A673 (cell line): ENCODE measurements at regions of chr6 and their contacts with region 1.

Region 1: DNA sequence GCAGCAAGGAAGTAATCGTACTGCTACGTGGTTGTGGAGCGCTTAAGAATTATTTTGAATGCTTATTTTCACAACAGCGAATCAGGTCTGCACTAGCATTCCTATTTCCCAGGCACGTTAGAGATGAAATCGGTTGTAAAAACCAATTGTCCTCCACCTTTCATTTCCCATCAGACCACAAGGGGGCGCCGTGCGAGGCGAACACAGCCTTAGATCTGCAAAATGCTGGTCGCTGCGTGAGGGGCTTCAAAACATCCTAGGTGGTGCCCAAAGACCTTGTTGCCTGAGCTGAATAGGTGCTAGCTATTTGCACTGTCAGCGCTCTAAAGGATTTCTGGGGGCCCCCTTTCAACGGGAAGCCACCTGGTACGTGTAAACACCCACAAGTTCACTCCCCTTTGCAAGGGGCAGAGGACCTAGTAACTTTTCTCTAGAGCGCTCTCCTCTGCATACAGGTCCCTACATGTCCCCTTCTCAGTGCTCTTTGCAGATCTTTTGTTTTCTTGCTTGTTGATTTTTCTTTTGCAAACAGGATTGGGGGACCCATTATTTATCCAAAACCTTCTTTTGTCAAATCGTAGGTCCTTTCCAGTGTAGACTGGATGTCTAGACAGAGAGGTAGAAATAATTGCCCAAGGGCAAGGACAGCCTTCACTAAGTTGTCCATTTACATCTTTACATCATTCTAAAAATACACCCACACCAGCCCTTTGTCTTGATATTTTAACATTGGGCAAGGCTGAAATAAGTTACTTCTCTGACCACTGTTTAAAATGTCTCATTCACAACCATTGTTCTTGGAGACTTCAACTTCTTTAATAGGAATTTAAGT is 59.8 kb downstream of the NEDD9 start:
- DNase-seq: peak; percentile 76
- H3K4me3 ChIP-seq: no peak overlapping the region
- H3K27ac ChIP-seq: no peak overlapping the region
- H3K4me1 ChIP-seq: peaks cover 4% of the 10 kb centered on the region
- H3K27me3 ChIP-seq: no peaks in the 10 kb centered on the region
- CTCF ChIP-seq: peak; percentile 93

Region 2: GRCh38 chr6:11161031-11161966 is 11.4 kb before region 1 on chr6:
- CTCF ChIA-PET with region 1: no interaction called
- POLR2A ChIA-PET with region 1: no interaction called
- intact Hi-C with region 1: no loop called
- DNase-seq: peak; percentile 24
- H3K4me3 ChIP-seq: no peak overlapping the region
- H3K27ac ChIP-seq: no peak overlapping the region
- H3K4me1 ChIP-seq: no peaks in the 10 kb centered on the region
- H3K27me3 ChIP-seq: no peaks in the 10 kb centered on the region
- CTCF ChIP-seq: no peak

Region 3: GRCh38 chr6:11232193-11232769 is 59.6 kb after region 1 on chr6 and contains the start of gene NEDD9:
- CTCF ChIA-PET with region 1: interaction called, 7 read pairs
- POLR2A ChIA-PET with region 1: interaction called, 7 read pairs
- intact Hi-C with region 1: loop called (anchors 2 kb)
- DNase-seq: peak; percentile 99
- H3K4me3 ChIP-seq: peak within 1 kb of the TSS; percentile 60
- H3K27ac ChIP-seq: peak within 1 kb of the TSS; percentile 73
- H3K4me1 ChIP-seq: peaks cover 23% of the 10 kb centered on the region
- H3K27me3 ChIP-seq: no peaks in the 10 kb centered on the region
- CTCF ChIP-seq: no peak
- total RNA-seq, gene NEDD9: 5.6 and 6.6 TPM in 2 replicates

Region 4: DNA sequence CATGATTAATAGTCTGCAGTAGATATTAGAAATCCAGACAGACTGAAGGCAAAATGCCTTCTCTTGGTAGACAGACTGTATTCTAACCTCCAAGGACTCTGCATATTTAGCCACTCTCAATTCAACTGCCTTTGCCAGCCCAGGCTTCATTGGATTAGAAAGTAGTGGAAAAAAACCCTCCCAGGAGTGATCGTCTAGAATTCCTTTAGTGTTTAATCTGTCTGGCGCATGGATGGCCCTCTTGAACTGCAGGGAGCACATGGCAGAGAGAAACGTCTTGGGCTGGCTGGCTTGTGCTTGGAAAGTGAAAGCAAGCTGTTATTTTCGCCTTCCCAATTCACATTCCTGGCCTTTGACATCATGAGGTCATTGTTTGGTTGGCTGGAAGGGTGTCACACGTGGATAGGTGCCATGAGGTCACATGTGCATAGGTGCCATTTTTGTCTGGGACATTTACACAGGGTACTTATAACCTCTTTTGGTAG is 90.6 kb after region 1 on chr6:
- CTCF ChIA-PET with region 1: no interaction called
- POLR2A ChIA-PET with region 1: no interaction called
- intact Hi-C with region 1: loop called (anchors 5 kb)
- DNase-seq: peak; percentile 85
- H3K4me3 ChIP-seq: no peak overlapping the region
- H3K27ac ChIP-seq: peak overlapping the region; percentile 5
- H3K4me1 ChIP-seq: peaks cover 23% of the 10 kb centered on the region
- H3K27me3 ChIP-seq: no peaks in the 10 kb centered on the region
- CTCF ChIP-seq: no peak